PC-9 (cell line): ENCODE measurements at regions of chr21 and their contacts with region 1.

Region 1: DNA sequence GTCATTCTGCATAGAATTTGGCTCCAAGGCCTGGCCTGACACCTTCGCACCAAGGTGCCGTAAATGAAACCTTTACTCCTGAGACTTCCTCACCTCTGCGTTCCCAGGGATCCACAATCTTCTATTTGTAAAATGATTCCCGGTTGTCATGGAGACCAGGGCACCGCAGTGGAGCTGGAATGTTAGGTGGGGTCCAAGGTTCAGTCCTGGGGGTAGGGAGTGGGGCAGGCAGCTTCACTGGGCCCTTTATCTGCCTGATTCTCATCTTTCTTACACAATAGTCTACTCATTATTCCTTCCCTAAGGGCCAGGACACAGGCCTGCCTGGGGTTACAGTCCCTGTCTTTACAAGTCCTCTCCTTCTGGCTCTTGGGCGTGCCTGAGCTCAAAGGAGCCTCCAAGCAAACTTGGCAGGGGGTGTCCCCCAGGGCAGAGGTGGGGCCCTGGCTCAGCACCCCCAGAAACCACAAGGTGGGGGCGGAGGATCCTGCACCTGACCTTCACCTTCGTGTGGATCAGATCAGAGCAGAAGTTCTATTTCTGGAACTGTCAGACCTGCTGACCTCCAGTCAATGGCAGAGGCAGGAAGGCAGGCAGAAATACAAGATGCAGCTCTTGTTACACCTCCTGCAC is 51.1 kb downstream of the RIPK4 start:
- DNase-seq: peak; percentile 95 to 98
- H3K4me3 ChIP-seq: no peak overlapping the region
- H3K27ac ChIP-seq: peak overlapping the region; percentile 93
- H3K4me1 ChIP-seq: peaks cover 49% of the 10 kb centered on the region
- H3K27me3 ChIP-seq: no peaks in the 10 kb centered on the region
- CTCF ChIP-seq: no peak

Region 2: GRCh38 chr21:41627428-41627827 is 88.3 kb before region 1 on chr21:
- CTCF ChIA-PET with region 1: no interaction called
- POLR2A ChIA-PET with region 1: no interaction called
- intact Hi-C with region 1: no loop called
- DNase-seq: no peak
- H3K4me3 ChIP-seq: no peak overlapping the region
- H3K27ac ChIP-seq: no peak overlapping the region
- H3K4me1 ChIP-seq: peaks cover 27% of the 10 kb centered on the region
- H3K27me3 ChIP-seq: no peaks in the 10 kb centered on the region
- CTCF ChIP-seq: no peak

Region 3: DNA sequence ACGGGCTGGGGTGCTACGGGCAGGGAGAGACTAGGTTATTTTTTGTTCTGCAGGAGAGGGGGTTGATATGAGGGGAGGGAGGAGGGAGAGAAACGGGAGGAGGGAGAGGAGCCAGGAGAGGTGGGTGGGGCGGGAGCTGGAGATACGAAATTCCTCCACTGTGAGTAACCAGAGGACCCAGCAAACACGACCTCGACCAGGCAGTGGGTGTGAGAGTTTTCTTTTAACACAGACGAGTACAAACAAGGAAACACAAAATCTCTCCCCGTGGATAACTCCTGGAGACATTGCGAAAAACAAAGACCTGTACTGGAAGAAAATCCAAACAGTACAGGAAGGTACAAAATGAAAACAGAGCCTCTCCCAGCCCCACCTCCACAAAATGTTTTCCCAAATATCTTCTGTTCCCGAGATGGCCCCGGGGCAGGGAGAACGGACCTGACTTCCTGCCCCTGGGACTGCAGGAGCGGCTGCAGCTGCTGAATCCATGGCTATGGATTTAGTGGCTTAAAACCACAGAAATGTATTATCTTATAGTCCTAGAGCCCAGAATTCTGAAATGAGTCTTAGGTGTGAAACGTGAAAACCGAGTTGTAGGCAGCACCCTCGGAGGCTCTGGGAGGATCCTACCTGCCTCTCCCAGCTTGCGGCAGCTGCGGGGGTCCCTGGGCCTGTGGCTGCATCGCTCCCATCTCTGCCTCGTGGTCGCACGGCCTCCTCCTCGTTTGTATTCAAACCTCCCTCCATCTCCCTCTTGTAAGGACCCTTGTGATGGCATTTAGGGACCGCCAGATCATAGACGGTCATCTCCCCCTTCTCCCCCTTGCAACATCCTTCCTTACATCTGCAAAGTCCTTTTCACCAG is 31.2 kb before region 1 on chr21:
- CTCF ChIA-PET with region 1: no interaction called
- POLR2A ChIA-PET with region 1: no interaction called
- intact Hi-C with region 1: loop called (anchors 1 kb)
- DNase-seq: peak; percentile 69 to 92
- H3K4me3 ChIP-seq: peak overlapping the region; percentile 7; the same call in 1 of the 2 replicates
- H3K27ac ChIP-seq: peak overlapping the region; percentile 99
- H3K4me1 ChIP-seq: peaks cover 77% of the 10 kb centered on the region
- H3K27me3 ChIP-seq: no peaks in the 10 kb centered on the region
- CTCF ChIP-seq: no peak

Region 4: DNA sequence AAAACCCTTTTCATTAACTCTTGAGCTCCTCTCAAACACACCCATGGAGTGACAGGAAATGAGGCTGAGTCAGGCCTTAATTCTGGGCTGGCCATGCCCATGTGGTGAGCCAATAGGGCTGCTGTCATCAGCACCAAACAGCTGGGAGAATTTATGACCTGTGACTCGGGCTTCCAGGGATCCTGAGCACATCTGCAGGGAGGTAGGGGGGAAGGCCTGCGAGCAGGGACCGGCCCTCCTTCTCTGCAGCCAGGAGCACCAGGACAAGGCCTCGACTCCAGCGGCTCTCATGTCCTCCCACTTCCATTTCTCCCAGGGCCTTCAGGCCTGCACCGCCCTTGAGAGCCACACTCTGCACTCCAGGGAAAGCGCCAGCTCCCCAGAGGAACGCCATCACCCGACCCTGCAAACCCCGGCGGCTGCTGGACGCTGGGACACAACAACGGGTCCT is 36.5 kb after region 1 on chr21:
- CTCF ChIA-PET with region 1: no interaction called
- POLR2A ChIA-PET with region 1: interaction called, 3 read pairs
- intact Hi-C with region 1: loop called (anchors 5 kb)
- DNase-seq: peak in 1 of 2 experiments; percentile 68
- H3K4me3 ChIP-seq: peak overlapping the region; percentile 25; the same call in 1 of the 2 replicates
- H3K27ac ChIP-seq: peak overlapping the region; percentile 68
- H3K4me1 ChIP-seq: peaks cover 75% of the 10 kb centered on the region
- H3K27me3 ChIP-seq: no peaks in the 10 kb centered on the region
- CTCF ChIP-seq: no peak

Region 5: GRCh38 chr21:41761211-41762181 is 45.7 kb after region 1 on chr21:
- CTCF ChIA-PET with region 1: no interaction called
- POLR2A ChIA-PET with region 1: interaction called, 4 read pairs
- intact Hi-C with region 1: loop called (anchors 2 kb)
- DNase-seq: peak; percentile 87 to 91
- H3K4me3 ChIP-seq: peak overlapping the region; percentile 100
- H3K27ac ChIP-seq: peak overlapping the region; percentile 99
- H3K4me1 ChIP-seq: peaks cover 44% of the 10 kb centered on the region
- H3K27me3 ChIP-seq: no peaks in the 10 kb centered on the region
- CTCF ChIP-seq: no peak

Region 6: DNA sequence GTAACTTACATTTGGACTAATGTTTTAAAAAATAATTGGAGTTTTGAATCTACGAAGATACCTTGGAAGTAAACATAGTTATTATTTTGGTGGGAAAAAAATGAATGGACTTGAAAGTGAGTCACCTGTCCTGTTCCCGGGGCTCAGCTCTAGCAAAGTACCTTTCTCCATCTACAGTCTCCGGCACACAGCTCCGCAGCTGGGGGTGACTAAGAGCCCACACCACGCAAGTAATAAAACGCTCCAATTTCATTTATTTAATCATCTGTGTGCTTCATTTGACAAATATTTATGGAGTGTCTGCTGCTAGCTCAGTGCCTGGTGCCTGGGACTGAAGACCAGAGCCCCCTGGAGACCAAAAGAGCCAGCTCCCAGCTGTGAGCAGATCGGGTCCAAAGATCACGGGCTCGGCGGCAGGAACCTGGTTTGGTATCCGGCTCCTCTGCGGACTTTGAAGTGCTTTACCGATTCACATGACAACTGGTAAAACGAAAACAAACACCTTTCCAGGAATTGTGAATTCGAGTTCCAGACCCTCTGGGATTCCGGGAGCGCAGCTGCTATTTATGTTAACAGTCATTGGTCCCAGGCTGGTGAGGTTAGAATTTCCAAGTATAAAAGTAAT is 52.8 kb after region 1 on chr21:
- CTCF ChIA-PET with region 1: no interaction called
- POLR2A ChIA-PET with region 1: interaction called, 13 read pairs
- intact Hi-C with region 1: no loop called
- DNase-seq: peak; percentile 28 to 80
- H3K4me3 ChIP-seq: peak overlapping the region; percentile 100
- H3K27ac ChIP-seq: peak overlapping the region; percentile 99
- H3K4me1 ChIP-seq: peaks cover 12% of the 10 kb centered on the region
- H3K27me3 ChIP-seq: no peaks in the 10 kb centered on the region
- CTCF ChIP-seq: no peak; the same call in 1 of the 2 replicates

Region 7: DNA sequence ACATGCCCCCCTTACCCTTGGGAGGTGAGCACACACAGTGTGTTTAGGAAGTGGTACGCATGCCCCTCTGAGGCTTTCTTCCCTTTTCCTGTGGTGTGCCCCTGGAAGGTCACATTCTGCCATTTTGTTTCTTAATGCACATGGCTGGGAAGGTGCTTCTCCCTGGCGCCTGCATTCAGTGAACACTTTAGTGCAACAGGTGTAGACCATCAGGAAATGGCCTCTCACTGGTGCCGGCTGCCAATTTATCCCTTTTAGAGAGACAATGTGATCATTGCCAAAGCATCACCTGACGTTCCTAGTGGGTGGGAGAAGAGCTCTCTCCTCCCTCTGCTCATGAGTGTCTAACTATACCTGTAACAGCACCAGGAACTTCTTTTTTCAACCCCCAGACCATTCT is 885.9 kb after region 1 on chr21:
- CTCF ChIA-PET with region 1: no interaction called
- POLR2A ChIA-PET with region 1: no interaction called
- intact Hi-C with region 1: no loop called
- DNase-seq: no peak
- H3K4me3 ChIP-seq: no peak overlapping the region
- H3K27ac ChIP-seq: no peak overlapping the region
- H3K4me1 ChIP-seq: no peaks in the 10 kb centered on the region
- H3K27me3 ChIP-seq: 0 out of 2 replicates have a peak, but pooled peaks cover 2% of the 10 kb centered on the region
- CTCF ChIP-seq: no peak